H1 (cell line): ENCODE measurements at regions of chr7 and their contacts with region 1.

Region 1: GRCh38 chr7:130084037-130084875 is 13.9 kb downstream of the KLHDC10 start:
- DNase-seq: no peak
- H3K4me3 ChIP-seq: no peak overlapping the region
- H3K27ac ChIP-seq: no peak overlapping the region
- H3K4me1 ChIP-seq: no peaks in the 10 kb centered on the region
- H3K27me3 ChIP-seq: no peaks in the 10 kb centered on the region
- CTCF ChIP-seq: peak in 2 of 3 experiments; percentile 26 to 63; a peak in 2 of 4 replicates
- EP300 ChIP-seq: no peak
- POLR2A ChIP-seq: no peak
- RAD21 ChIP-seq: 0 out of 4 replicates have a peak, but pooled peaks of 1 of the 2 experiments have one; percentile 8

Region 2: DNA sequence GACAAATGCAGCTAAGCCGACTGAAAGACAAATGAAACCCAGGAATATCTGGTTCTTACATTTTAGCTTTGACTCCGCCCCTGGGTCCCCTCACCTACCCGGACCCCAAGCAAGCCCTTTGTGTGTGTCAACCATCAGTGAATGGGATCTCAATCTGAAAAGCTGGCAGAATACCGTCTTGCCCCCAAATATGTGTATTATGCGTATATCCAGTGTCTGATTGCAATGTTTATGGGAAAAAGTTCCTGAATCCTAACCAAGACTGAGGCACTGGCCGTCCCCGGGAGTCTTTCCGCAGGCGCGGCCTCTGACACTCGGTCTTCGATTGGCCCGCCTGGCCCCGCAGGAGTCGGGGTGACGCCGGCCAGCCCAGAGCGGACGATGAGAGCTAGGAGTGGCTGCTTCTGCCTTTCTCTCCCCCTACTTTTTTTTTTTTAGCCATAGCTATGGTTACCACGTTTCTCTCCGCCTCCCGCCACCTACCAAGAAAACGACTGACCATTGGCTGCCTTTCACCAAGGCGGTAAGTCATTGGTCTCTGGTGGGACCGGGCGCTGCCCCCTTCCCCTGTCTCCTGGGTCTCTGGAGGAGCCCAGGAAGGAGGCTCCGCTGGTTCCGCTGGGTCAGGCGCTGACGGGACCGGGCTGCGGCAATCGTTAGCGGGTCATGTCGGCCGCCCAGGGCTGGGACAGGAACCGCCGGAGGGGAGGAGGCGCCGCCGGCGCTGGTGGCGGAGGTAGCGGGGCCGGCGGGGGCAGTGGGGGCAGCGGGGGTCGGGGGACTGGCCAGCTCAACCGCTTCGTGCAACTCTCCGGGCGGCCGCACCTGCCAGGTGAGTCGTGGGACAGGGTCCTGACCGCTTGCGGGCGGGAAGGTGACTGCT is 14.0 kb before region 1 on chr7 and contains the start of gene KLHDC10:
- CTCF ChIA-PET with region 1: interaction called, 25 read pairs
- POLR2A ChIA-PET with region 1: interaction called, 3 read pairs
- DNase-seq: peak; percentile 94 to 95
- H3K4me3 ChIP-seq: peak within 1 kb of the TSS; percentile 71 to 95 (median 84)
- H3K27ac ChIP-seq: peak within 1 kb of the TSS; percentile 44; the same call in 1 of the 2 replicates
- H3K4me1 ChIP-seq: peaks cover 0 to 2% (median 0%) of the 10 kb centered on the region in 4 experiments; a peak in 1 of 7 replicates
- H3K27me3 ChIP-seq: no peaks in the 10 kb centered on the region
- CTCF ChIP-seq: no peak
- EP300 ChIP-seq: peak in 1 of 2 experiments; percentile 83; a peak in 1 of 3 replicates
- POLR2A ChIP-seq: peak in 1 of 2 experiments; percentile 79; a peak in 2 of 3 replicates
- RAD21 ChIP-seq: no peak
- total RNA-seq, gene KLHDC10: 14.5 and 21.1 TPM in 2 replicates

Region 3: DNA sequence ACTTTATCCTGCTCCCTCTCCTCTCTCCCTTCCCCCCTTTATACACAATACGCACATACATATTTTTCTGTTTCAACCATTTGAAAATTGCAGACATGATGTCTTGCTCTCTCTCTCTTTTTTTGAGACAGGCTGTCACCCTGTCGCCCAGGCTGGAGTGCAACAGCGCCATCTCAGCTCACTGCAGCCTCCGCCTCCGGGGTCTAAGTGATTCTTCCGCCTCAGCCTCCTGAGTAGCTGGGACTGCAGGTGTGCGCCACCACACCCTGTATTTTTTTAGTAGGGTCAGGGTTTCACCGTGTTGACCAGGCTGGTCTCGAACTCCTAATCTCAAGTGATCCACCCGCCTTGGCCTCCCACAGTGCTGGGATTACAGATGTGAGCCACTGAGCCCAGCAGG is 24.6 kb after region 1 on chr7:
- CTCF ChIA-PET with region 1: interaction called, 13 read pairs
- POLR2A ChIA-PET with region 1: no interaction called
- DNase-seq: no peak
- H3K4me3 ChIP-seq: no peak overlapping the region
- H3K27ac ChIP-seq: no peak overlapping the region
- H3K4me1 ChIP-seq: no peaks in the 10 kb centered on the region
- H3K27me3 ChIP-seq: no peaks in the 10 kb centered on the region
- CTCF ChIP-seq: no peak
- EP300 ChIP-seq: no peak
- POLR2A ChIP-seq: no peak
- RAD21 ChIP-seq: no peak

Region 4: GRCh38 chr7:130397051-130397757 is 312.9 kb after region 1 on chr7:
- CTCF ChIA-PET with region 1: no interaction called
- POLR2A ChIA-PET with region 1: no interaction called
- DNase-seq: no peak
- H3K4me3 ChIP-seq: no peak overlapping the region
- H3K27ac ChIP-seq: no peak overlapping the region
- H3K4me1 ChIP-seq: peaks cover 0 to 2% (median 0%) of the 10 kb centered on the region in 4 experiments; a peak in 2 of 7 replicates
- H3K27me3 ChIP-seq: no peaks in the 10 kb centered on the region
- CTCF ChIP-seq: no peak
- EP300 ChIP-seq: no peak
- POLR2A ChIP-seq: no peak
- RAD21 ChIP-seq: no peak